ENCODE measurements at regions of chr3 and their contacts with region 1.

Region 1: DNA sequence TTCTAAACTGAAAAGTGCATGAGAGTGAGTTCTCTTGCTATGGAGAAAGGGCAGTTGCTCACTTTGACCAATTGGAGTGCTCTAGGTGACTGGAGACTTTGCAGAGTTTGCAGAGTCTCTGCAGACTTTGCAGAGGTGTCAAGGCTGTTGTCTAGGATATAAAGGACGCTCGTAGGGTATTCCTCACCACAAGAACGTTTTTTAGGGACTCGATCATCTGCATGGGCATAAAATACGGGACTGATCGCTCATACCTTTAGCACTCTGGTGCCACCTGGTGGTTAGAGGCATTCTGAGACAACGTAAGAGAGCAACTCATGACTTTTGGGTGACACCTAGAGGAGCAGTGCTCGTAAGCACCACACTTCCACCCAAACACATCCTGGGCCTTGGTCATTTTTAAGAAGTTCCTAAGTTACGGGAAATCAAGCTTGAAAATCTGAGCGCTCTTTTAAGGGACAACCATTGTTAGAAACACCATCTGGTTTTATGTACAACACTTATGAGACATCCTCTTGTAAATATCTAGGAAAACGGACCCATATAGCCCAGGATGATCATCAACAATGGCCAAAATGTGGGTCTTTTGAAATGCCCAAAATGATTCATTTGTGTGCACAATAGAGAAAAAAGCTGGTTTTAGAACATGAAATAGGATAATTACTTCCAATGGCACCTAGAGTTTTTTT is 51.6 kb upstream of the XCR1 start:
- DNase-seq: peak; percentile 74 to 86
- ATAC-seq: peak; percentile 95 to 99
- H3K4me3 ChIP-seq: peak overlapping the region in 3 of 4 donors; percentile 11 to 41 (median 38)
- H3K27ac ChIP-seq: peak overlapping the region in 1 of 4 donors; percentile 33
- H3K4me1 ChIP-seq: peaks cover 0 to 9% of the 10 kb centered on the region in 2 donors
- H3K27me3 ChIP-seq: no peaks in the 10 kb centered on the region
- CTCF ChIP-seq: peak; percentile 97 to 99 (median 97)
- POLR2A ChIP-seq: no peak

Region 2: DNA sequence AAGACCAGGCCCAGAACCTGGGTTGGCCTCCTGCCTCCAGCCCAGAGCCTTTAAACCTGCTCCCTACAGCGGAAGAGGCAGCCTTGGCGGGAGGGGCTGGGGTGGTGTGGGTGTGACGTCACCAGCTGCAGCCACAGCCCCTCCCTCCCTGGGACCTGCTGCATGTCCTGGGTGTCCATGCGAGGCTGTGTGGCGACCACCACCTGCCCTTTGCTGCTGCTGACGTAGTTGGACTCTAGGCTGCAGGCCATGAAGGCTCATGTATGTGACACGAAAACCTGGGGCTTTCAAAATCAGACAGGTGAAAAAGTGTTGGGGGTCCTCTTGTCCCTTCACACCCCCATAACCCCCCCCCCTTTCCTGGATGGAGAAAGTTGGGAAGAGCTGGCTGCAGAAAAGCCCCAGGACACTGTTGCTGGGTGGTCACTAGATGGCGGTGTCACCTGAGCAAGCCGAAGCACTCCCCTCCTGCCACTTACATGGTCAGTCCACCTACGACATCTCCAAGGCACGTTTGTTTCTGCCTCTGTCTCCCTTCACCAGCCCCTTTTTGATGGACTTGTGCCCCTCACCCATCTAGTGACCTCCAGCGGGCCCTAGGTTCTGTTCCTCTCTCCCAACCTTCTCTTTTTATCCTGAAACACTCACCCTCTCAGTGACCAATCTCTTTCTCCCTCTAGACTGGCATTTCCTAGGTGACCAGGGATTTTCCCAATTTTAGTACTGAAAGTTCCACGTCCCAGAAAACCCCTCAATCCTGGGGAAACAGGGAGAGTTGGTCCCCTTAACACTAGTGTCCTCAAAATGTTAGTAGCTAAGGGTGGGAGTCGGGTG is 317.8 kb before region 1 on chr3:
- in situ Hi-C with region 1: loop called in 3 of 4 experiments (anchors 10 to 25 kb)
- intact Hi-C with region 1: loop called (anchors 2 kb)
- DNase-seq: peak; percentile 49 to 62
- ATAC-seq: peak; percentile 89 to 95
- H3K4me3 ChIP-seq: no peak overlapping the region
- H3K27ac ChIP-seq: no peak overlapping the region
- H3K4me1 ChIP-seq: no peaks in the 10 kb centered on the region
- H3K27me3 ChIP-seq: no peaks in the 10 kb centered on the region
- CTCF ChIP-seq: peak; percentile 73 to 89 (median 83)
- POLR2A ChIP-seq: no peak

Region 3: DNA sequence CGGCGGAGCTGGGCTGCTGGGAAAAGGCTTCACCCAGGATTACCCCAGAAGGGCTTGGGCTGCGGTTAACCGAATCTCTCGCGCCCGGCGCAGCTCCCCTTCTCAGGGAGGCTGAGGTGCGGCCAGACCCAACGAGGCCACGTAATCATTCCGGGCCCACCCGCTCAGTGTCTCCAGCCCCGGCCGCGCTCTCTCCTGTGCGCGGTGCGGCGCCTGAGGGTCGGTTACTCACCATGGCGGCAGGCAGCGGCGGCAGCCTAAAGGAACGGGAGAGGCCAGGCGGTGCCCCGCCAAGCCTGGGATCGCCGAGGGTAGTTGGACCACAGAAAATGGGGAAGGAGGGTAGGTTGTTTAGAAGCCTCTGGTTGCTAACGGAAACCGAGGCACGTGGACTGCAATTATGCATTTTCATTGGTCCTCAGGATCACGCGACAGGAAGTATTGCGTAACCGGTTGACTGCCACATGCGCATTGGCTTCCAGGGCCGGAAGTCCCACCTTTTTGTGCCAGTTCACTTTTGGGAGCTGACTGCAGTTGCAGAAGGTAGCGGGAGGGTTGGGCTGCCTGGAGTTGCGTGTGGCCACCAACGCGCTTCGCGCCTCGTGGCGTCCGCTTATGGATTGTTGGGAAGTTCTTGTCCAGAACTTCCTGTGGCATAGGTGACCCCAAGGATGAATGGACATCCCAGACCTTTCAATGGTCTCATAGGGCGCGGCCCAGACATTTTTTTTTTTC is 236.9 kb before region 1 on chr3 and contains the start of gene LZTFL1:
- in situ Hi-C with region 1: no loop called
- intact Hi-C with region 1: loop called (anchors 10 kb)
- DNase-seq: peak; percentile 91 to 95
- ATAC-seq: peak; percentile 99 to 100
- H3K4me3 ChIP-seq: peak within 1 kb of the TSS; percentile 85 to 98 (median 98)
- H3K27ac ChIP-seq: peak within 1 kb of the TSS; percentile 24 to 69 (median 57)
- H3K4me1 ChIP-seq: peaks cover 16 to 17% of the 10 kb centered on the region in 2 donors
- H3K27me3 ChIP-seq: no peaks in the 10 kb centered on the region
- CTCF ChIP-seq: no peak
- POLR2A ChIP-seq: no peak
- total RNA-seq, gene LZTFL1: 3.2 to 7.6 (median 5.0) TPM

Region 4: DNA sequence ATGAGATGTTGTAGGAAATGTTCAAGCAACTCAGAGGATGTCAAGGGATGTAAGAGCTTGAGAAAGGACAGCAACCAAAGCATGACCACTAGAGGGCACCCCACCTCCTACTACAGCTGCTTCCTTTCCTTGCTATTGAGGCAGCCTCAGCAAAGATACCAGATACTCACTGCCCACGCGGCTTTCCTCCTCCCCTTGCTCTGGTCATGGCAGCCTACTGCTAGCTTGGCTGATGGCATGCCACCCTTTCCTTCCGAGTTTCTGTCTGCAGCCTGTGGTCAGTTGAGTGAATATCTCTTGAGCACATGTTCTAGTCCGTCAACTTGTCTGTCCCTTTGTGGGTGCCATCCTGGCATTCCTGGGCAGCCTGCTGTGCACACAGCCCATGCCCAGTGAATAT is 140.0 kb before region 1 on chr3:
- in situ Hi-C with region 1: loop called (anchors 5 kb)
- intact Hi-C with region 1: loop called (anchors 1 kb)
- DNase-seq: peak; percentile 84 to 90
- ATAC-seq: peak; percentile 89 to 96
- H3K4me3 ChIP-seq: no peak overlapping the region
- H3K27ac ChIP-seq: peak overlapping the region; percentile 49 to 80 (median 72)
- H3K4me1 ChIP-seq: peaks cover 15 to 33% of the 10 kb centered on the region in 2 donors
- H3K27me3 ChIP-seq: no peaks in the 10 kb centered on the region
- CTCF ChIP-seq: peak; percentile 83 to 93 (median 91)
- POLR2A ChIP-seq: no peak

Region 5: GRCh38 chr3:46006238-46007032 is 72.4 kb before region 1 on chr3:
- in situ Hi-C with region 1: no loop called
- intact Hi-C with region 1: loop called (anchors 5 kb)
- DNase-seq: no peak
- ATAC-seq: peak; percentile 45 to 51
- H3K4me3 ChIP-seq: no peak overlapping the region
- H3K27ac ChIP-seq: peak overlapping the region; percentile 39 to 51 (median 44)
- H3K4me1 ChIP-seq: peaks cover 9 to 11% of the 10 kb centered on the region in 2 donors
- H3K27me3 ChIP-seq: no peaks in the 10 kb centered on the region
- CTCF ChIP-seq: no peak
- POLR2A ChIP-seq: no peak

Region 6: GRCh38 chr3:46052546-46052945 is 26.3 kb before region 1 on chr3:
- in situ Hi-C with region 1: no loop called
- intact Hi-C with region 1: loop called (anchors 2 kb)
- DNase-seq: no peak
- ATAC-seq: no peak
- H3K4me3 ChIP-seq: no peak overlapping the region
- H3K27ac ChIP-seq: no peak overlapping the region
- H3K4me1 ChIP-seq: no peaks in the 10 kb centered on the region
- H3K27me3 ChIP-seq: no peaks in the 10 kb centered on the region
- CTCF ChIP-seq: no peak
- POLR2A ChIP-seq: no peak

Region 7: GRCh38 chr3:46368569-46368968 is 289.7 kb after region 1 on chr3:
- in situ Hi-C with region 1: loop called in 1 of 4 experiments (anchors 25 kb)
- intact Hi-C with region 1: loop called (anchors 10 kb)
- DNase-seq: peak in 1 of 2 donors; percentile 35
- ATAC-seq: peak in 1 of 2 donors; percentile 24
- H3K4me3 ChIP-seq: no peak overlapping the region
- H3K27ac ChIP-seq: no peak overlapping the region
- H3K4me1 ChIP-seq: no peaks in the 10 kb centered on the region
- H3K27me3 ChIP-seq: peaks cover 0 to 10% (median 2%) of the 10 kb centered on the region in 3 donors
- CTCF ChIP-seq: no peak
- POLR2A ChIP-seq: no peak